Left ventricle myocardium inferior (tissue), 1 donor: ENCODE measurements at regions of chr1 and their contacts with region 1.

Region 1: GRCh38 chr1:203038891-203039608 is 12.8 kb downstream of the PPFIA4 start:
- DNase-seq: peak; percentile 72
- H3K4me3 ChIP-seq: peak overlapping the region; percentile 38
- H3K27ac ChIP-seq: peak overlapping the region; percentile 87
- H3K4me1 ChIP-seq: peaks cover 71% of the 10 kb centered on the region
- H3K27me3 ChIP-seq: no peaks in the 10 kb centered on the region
- CTCF ChIP-seq: peak; percentile 93

Region 2: DNA sequence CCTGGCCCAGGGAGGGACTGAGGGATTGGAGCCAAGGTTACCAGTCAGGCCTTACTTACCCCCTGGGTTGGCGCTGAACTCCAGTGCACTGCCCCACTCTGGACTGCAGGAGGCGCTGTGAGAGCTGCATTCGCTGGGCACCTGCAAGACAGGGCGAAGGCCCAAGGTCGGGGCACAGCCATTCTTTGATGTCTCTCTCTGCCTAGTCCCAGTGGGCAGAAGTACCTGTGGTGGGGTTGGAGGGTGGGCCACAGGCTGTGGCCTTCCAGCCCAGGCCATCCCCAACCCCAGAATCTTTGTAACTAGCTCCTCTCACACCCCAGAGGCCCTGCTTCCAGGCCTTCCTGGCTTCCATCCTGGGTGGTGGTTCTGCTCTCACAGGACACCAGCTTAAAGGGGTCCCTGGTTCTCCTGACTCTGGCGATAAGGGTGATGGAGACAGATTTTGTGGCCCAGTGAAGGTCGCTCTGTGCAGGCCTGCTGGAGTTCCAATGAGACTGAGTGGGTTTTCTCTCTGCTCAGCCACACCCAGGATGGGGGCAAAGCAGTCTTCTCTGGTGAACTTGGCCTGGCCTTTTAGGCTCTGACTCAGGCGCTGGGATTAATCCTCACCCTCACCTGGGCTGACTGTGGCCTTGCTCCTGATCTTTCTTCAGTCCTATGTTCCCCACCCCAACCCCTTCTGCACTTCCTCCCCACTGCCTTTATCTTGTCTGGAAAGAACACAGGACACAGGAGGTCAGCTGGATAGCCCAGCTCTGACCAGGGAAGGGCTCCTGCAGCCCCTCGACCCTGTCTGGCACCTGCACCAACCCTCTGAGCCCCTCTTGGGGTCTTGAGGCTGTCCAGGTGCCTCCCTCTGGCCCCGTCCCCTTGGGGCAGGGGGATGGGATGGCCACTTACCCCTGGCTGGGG is 45.8 kb after region 1 on chr1:
- intact Hi-C with region 1: no loop called
- DNase-seq: no peak
- H3K4me3 ChIP-seq: no peak overlapping the region
- H3K27ac ChIP-seq: no peak overlapping the region
- H3K4me1 ChIP-seq: peaks cover 5% of the 10 kb centered on the region
- H3K27me3 ChIP-seq: no peaks in the 10 kb centered on the region
- CTCF ChIP-seq: no peak

Region 3: GRCh38 chr1:203117611-203118575 is 78.8 kb after region 1 on chr1:
- intact Hi-C with region 1: loop called (anchors 10 kb)
- DNase-seq: peak; percentile 74
- H3K4me3 ChIP-seq: no peak overlapping the region
- H3K27ac ChIP-seq: no peak overlapping the region
- H3K4me1 ChIP-seq: peaks cover 9% of the 10 kb centered on the region
- H3K27me3 ChIP-seq: peaks cover 69% of the 10 kb centered on the region
- CTCF ChIP-seq: peak; percentile 86

Region 4: DNA sequence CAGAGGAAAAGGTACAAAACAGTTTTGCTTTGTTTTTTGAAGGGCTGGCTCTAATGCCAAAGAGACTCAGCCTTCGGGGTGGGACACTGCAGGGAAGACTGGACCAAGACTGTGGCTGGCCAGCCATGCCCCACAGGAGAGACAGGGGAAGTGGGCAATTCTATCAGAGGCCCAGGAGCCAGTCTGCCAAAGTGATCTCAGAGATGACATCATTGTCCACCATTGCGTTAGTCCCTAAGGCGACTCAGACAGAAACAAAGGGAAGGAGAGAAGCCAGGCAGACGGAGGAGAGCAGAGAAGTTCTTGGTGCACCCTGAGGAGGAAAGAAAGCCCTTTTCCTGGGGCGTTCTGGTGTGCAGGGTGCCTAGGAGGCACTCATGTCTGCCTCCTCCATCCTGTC is 481.3 kb after region 1 on chr1:
- intact Hi-C with region 1: no loop called
- DNase-seq: no peak
- H3K4me3 ChIP-seq: no peak overlapping the region
- H3K27ac ChIP-seq: no peak overlapping the region
- H3K4me1 ChIP-seq: peaks cover 40% of the 10 kb centered on the region
- H3K27me3 ChIP-seq: no peaks in the 10 kb centered on the region
- CTCF ChIP-seq: no peak